Cardiac septum (tissue), 1 donor: ENCODE measurements at regions of chr14 and their contacts with region 1.

Region 1: GRCh38 chr14:65958664-65959562 is 527.3 kb upstream of the CCDC196 start:
- DNase-seq: no peak

Region 2: DNA sequence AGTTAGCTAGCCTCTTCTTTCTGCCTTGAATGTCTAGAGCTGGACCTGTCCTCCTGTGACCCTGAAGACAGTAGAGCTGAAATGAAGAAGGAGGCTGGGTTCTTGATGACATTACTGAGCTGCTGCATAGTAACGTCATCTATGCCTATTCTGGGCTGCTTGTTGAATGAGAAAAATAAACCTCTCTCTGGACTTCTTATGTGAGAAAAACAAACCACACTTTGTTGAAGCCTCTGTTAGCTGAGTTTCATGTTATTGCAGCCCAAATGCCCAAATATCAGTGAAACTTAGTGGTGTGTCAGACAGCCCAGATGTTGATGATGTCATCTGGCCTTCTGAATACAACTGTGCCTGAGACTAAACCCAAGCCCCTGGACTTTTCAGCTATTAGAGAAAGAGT is 789.6 kb before region 1 on chr14:
- intact Hi-C with region 1: loop called (anchors 5 kb)
- DNase-seq: no peak

Region 3: GRCh38 chr14:65993103-65993502 is 34.2 kb after region 1 on chr14:
- intact Hi-C with region 1: no loop called
- DNase-seq: no peak